ENCODE measurements at regions of chrX and their contacts with region 1.

Region 1: DNA sequence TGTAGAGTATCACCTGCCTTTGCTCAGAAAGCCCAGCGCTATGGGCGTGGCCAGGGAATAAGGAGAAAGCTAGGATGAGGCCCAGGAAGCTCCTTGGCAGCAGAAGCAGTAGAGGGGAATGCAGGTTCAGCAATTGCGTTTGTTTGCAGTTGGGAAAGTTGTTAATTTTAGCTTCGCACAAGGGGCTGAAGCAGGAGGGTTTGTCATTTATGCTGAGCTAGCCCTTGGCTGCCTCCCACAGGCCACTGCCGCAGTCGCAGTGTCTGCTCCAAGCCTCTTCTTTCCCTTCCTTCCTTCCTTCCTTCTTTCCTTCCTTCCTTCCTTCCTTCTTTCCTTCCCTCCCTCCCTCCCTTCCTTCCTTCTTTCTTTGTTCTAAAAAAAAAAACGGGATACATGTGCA is 21.5 kb downstream of the FRMPD3 start:
- DNase-seq: no peak
- H3K4me3 ChIP-seq: no peak overlapping the region
- H3K27ac ChIP-seq: no peak overlapping the region
- H3K4me1 ChIP-seq: peaks cover 0 to under 1% (median 0%) of the 10 kb centered on the region in 4 experiments; a peak in 1 of 7 replicates
- H3K27me3 ChIP-seq: no peaks in the 10 kb centered on the region
- CTCF ChIP-seq: peak; percentile 43 to 59 (median 45)
- EP300 ChIP-seq: no peak
- POLR2A ChIP-seq: no peak
- RAD21 ChIP-seq: peak; percentile 50 to 61

Region 2: GRCh38 chrX:107384407-107385105 is 86.4 kb before region 1 on chrX:
- CTCF ChIA-PET with region 1: no interaction called
- POLR2A ChIA-PET with region 1: no interaction called
- DNase-seq: no peak
- H3K4me3 ChIP-seq: no peak overlapping the region
- H3K27ac ChIP-seq: no peak overlapping the region
- H3K4me1 ChIP-seq: no peaks in the 10 kb centered on the region; a peak in 2 of 7 replicates
- H3K27me3 ChIP-seq: no peaks in the 10 kb centered on the region
- CTCF ChIP-seq: no peak
- EP300 ChIP-seq: no peak
- POLR2A ChIP-seq: no peak
- RAD21 ChIP-seq: no peak

Region 3: DNA sequence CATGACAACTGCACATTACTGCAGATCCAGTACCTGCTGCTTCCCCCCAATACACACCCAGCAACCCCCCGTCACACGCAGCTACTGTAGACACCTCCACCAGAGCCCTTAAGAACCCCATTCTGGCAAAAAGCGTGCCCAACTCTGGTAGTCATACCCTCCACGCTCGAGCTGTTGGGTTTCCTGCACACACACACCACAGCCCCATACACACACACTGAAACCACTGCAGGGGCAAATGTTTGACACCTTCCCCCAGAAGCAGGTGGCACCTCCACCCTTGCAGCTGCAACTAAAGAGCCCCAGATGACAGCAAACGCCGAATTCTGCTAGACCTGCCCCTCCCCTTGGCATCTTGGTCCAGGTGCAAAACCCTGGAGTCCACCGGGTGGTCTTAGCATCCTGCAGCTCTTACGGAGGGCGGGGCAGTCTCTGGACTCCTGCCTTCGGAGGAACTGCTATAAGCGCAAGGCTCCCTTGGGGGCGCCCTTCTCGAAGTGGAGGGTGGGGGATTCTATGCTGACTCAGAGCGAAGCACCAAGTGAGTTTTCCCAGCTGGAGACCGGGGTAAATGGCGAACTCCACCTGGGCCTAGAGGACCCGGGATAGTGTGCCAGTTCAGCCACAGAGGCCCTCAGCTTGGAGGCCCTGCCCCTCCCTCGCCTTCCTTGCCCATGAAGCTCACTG is 20.0 kb before region 1 on chrX:
- CTCF ChIA-PET with region 1: interaction called, 13 read pairs
- POLR2A ChIA-PET with region 1: no interaction called
- DNase-seq: peak in 1 of 2 experiments; percentile 73
- H3K4me3 ChIP-seq: peak overlapping the region; percentile 39 to 75 (median 46); a peak in 7 of 8 replicates
- H3K27ac ChIP-seq: no peak overlapping the region
- H3K4me1 ChIP-seq: peaks cover 3 to 20% (median 11%) of the 10 kb centered on the region in 4 experiments
- H3K27me3 ChIP-seq: peaks cover 0 to 21% (median 9%) of the 10 kb centered on the region in 4 experiments; a peak in 6 of 7 replicates
- CTCF ChIP-seq: peak; percentile 36 to 58 (median 44); a peak in 3 of 4 replicates
- EP300 ChIP-seq: no peak
- POLR2A ChIP-seq: no peak
- RAD21 ChIP-seq: peak in 1 of 2 experiments; percentile 38; a peak in 2 of 4 replicates

Region 4: GRCh38 chrX:107484002-107484726 is 13.2 kb after region 1 on chrX:
- CTCF ChIA-PET with region 1: interaction called, 10 read pairs
- POLR2A ChIA-PET with region 1: no interaction called
- DNase-seq: no peak
- H3K4me3 ChIP-seq: no peak overlapping the region
- H3K27ac ChIP-seq: no peak overlapping the region
- H3K4me1 ChIP-seq: peaks cover 0 to 4% (median under 1%) of the 10 kb centered on the region in 4 experiments; a peak in 1 of 7 replicates
- H3K27me3 ChIP-seq: no peaks in the 10 kb centered on the region
- CTCF ChIP-seq: no peak
- EP300 ChIP-seq: no peak
- POLR2A ChIP-seq: no peak
- RAD21 ChIP-seq: no peak

Region 5: DNA sequence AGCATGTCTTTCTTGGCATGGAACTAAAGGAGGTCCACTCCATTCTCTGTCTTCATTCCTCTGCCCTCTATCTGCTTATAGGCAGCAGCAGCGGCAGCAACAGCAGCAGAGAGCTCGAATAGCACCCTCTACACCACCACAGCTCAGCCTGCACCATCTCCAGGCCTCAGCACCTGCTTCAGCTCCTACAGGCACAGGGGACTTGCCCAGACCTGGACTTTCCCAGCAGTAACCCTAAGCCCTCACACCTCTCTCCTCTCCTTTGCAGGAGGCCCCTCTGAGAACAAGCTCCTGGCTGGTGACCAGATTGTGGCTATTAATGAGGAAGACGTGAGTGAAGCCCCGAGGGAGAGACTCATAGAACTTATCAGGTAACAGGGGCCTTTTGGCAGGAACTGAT is 59.2 kb after region 1 on chrX:
- CTCF ChIA-PET with region 1: no interaction called
- POLR2A ChIA-PET with region 1: no interaction called
- DNase-seq: no peak
- H3K4me3 ChIP-seq: no peak overlapping the region
- H3K27ac ChIP-seq: no peak overlapping the region
- H3K4me1 ChIP-seq: no peaks in the 10 kb centered on the region
- H3K27me3 ChIP-seq: no peaks in the 10 kb centered on the region
- CTCF ChIP-seq: no peak
- EP300 ChIP-seq: no peak
- POLR2A ChIP-seq: no peak
- RAD21 ChIP-seq: no peak

Region 6: DNA sequence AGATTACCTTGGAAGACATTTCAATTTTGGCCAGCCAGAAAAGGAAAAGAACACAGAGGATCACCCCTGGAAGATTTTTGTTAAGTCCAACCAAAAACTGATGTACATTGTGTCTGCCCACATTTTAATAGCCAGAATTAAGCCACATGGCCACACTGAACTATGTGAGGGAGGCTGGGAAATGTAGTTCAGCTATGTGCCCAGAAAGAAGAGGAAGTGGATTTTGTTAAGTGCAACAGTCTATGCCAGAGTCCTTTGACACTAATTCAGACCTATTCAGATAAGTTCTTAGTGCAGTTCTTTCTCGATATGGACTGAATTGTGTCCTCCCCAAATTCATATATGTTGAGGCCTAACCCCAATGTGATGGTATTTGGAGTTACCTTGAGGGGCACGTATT is 175.8 kb after region 1 on chrX:
- CTCF ChIA-PET with region 1: no interaction called
- POLR2A ChIA-PET with region 1: no interaction called
- DNase-seq: no peak
- H3K4me3 ChIP-seq: no peak overlapping the region
- H3K27ac ChIP-seq: no peak overlapping the region
- H3K4me1 ChIP-seq: no peaks in the 10 kb centered on the region
- H3K27me3 ChIP-seq: no peaks in the 10 kb centered on the region
- CTCF ChIP-seq: no peak
- EP300 ChIP-seq: no peak
- POLR2A ChIP-seq: no peak
- RAD21 ChIP-seq: no peak